ENCODE measurements at regions of chr15 and their contacts with region 1.

Region 1: DNA sequence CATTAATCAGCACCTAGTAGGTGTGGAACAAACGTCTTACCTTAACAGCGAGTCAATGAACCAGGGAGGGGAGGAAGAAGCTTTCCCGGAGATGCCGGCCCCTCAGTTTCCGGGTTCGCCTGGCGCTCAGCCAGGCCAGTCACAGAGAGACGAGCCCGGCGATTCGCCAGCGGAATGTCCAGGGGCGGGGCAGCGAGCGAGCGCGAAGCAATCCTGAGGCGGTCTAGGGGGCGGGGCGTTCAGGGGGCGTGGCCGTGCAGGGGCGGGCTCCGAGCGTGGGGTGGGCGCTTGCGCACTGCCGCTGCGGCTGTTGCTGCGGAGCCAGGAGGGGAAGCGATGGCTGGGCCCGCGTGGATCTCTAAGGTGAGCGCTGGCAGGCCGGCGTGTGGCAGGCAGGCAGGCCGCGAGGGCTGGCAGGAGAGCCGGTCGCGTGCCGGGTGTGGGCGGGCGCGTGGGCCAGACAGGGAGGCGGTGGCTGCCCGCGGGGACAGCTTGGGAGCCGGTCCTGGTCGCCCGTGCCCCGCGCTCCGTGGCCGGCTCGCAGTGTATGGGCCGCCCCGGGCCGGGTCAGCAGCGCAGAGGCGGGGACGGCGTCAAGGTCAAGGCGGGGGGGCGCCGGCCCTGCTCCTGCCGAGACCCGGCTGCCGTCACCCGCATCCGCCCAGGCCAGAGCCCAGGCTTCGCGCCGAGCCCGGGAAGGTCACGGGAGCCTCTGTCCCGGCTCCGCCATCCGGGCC is at the start of gene IDH3A:
- DNase-seq: peak; percentile 100
- H3K4me3 Mint-ChIP-seq: peak within 1 kb of the TSS; percentile 98
- H3K27ac Mint-ChIP-seq: peak within 1 kb of the TSS; percentile 93
- H3K4me1 Mint-ChIP-seq: peaks cover 38% of the 10 kb centered on the region
- H3K27me3 Mint-ChIP-seq: no peaks in the 10 kb centered on the region
- total RNA-seq, gene IDH3A: 165 and 169 TPM in 2 replicates

Region 2: GRCh38 chr15:78170848-78171773 is 21.9 kb after region 1 on chr15:
- intact Hi-C with region 1: loop called (anchors 1 kb)
- DNase-seq: peak; percentile 55
- H3K4me3 Mint-ChIP-seq: no peak overlapping the region
- H3K27ac Mint-ChIP-seq: no peak overlapping the region
- H3K4me1 Mint-ChIP-seq: peaks cover 57% of the 10 kb centered on the region
- H3K27me3 Mint-ChIP-seq: no peaks in the 10 kb centered on the region

Region 3: DNA sequence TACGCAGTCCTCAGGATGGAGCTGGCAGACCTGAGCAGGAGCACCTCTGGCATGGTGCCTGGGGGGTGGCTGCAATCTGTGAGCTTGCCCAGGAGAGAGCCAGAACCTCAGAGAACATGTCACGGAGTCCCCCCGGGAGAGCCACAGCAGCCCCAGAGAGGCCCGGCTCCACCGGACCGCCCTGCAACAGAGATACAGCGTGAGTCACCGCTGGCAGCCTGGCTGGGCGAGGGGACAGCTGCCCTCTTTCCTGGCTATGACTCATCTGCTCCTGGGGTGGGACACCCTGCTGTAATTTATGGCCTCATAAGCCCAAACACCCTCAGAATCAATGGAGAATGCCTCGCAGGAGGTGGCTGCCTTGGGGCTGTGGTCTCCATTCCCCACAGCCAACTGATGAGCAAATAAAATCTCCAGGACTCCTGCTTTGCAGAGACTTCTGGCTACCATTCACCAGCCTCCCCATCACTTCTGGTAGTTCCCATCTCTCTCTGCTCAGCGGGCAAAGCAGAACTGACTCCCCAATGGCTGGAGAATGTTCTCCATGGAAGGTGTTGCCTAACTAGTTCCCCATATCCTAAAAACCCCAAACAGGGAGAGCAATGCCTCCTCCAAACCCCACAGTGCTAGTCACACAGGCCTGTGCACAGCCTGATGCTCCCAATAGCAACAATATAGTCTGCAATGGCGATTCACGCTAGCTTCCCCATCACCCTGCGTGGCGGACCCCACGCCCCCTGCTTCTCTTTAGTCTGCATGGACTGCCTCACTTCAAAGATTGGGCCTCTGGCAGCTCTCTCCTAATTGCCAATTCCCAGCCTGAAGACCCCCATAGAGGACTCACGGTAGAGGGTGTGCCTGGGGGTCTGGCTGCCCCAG is 63.5 kb after region 1 on chr15:
- intact Hi-C with region 1: no loop called
- DNase-seq: no peak
- H3K4me3 Mint-ChIP-seq: no peak overlapping the region
- H3K27ac Mint-ChIP-seq: no peak overlapping the region
- H3K4me1 Mint-ChIP-seq: no peaks in the 10 kb centered on the region
- H3K27me3 Mint-ChIP-seq: peaks cover 8% of the 10 kb centered on the region